ENCODE measurements at regions of chr2 and their contacts with region 1.

Region 1: DNA sequence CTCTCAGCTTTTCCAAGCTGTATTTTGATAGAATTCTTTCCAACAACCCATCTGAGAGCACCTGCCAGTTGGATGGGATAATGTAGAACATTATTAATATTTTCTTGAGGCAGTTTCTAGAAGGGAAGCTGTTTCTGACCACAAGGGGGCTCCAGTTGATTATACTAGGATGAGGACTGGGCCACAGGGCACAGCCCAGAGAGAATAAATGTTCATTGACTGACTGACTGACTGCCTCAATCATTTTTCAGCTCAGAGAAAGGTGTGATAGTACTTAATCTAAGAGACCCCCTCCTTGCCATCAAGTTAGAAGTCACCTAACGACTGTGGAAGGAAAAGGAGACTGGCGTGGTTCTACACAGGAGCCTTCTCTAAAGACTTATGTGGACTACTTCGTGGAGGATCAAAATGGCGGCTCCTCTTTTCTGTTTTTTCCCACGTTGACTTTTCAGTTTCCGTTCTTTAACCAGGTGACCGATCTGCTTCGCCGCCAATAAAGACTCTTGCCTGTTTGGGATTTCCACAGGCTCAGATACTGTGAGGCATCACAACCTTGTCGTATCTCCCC is 31.9 kb upstream of the CREG2 start:
- DNase-seq: peak; percentile 64
- H3K4me3 Mint-ChIP-seq: no peak overlapping the region
- H3K27ac Mint-ChIP-seq: no peak overlapping the region
- H3K4me1 Mint-ChIP-seq: no peaks in the 10 kb centered on the region
- H3K27me3 Mint-ChIP-seq: no peaks in the 10 kb centered on the region

Region 2: DNA sequence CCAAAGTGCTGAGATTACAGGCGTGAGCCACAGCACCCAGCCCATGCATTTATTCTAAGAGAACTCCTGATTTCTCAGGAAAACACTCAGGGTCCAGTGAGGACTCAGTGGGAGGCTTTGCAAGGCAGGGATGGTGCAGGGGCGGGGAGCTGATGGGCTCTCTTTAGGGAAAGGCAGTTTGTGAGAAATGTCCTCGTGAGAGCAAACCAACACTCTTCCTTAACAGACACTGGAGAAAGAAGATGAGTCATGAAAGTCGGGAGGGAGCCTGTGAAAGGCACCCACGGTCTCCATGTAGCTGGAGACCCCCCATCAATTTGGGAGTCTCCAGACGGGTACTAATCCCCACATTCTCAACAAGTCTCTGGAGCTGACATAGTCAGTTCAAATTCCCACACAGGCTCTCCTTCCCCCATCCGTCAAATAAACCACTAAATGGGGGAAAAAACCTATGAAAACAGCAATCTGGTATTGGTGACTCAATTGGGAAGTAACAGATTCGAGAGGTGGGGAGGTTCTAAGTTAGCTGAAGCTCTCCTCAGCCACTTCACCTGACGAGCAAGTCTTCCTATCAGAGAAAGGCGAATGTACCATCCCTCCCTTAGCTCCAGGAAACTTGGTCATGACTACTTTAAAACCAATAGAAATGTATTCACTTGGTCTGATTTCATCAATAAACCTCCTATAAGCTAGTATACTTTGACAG is 20.9 kb before region 1 on chr2:
- CTCF ChIA-PET with region 1: interaction called, 10 read pairs
- POLR2A ChIA-PET with region 1: no interaction called
- DNase-seq: no peak
- H3K4me3 Mint-ChIP-seq: no peak overlapping the region
- H3K27ac Mint-ChIP-seq: no peak overlapping the region
- H3K4me1 Mint-ChIP-seq: peaks cover 13% of the 10 kb centered on the region
- H3K27me3 Mint-ChIP-seq: peaks cover 28% of the 10 kb centered on the region

Region 3: GRCh38 chr2:101509499-101510284 is 90.5 kb after region 1 on chr2:
- CTCF ChIA-PET with region 1: no interaction called
- POLR2A ChIA-PET with region 1: no interaction called
- DNase-seq: no peak
- H3K4me3 Mint-ChIP-seq: no peak overlapping the region
- H3K27ac Mint-ChIP-seq: no peak overlapping the region
- H3K4me1 Mint-ChIP-seq: peaks cover 2% of the 10 kb centered on the region
- H3K27me3 Mint-ChIP-seq: peaks cover 4% of the 10 kb centered on the region

Region 4: GRCh38 chr2:101558740-101559519 is 139.8 kb after region 1 on chr2:
- CTCF ChIA-PET with region 1: no interaction called
- POLR2A ChIA-PET with region 1: no interaction called
- DNase-seq: no peak
- H3K4me3 Mint-ChIP-seq: no peak overlapping the region
- H3K27ac Mint-ChIP-seq: no peak overlapping the region
- H3K4me1 Mint-ChIP-seq: peaks cover 26% of the 10 kb centered on the region
- H3K27me3 Mint-ChIP-seq: no peaks in the 10 kb centered on the region

Region 5: GRCh38 chr2:101725515-101726192 is 306.5 kb after region 1 on chr2:
- CTCF ChIA-PET with region 1: interaction called, 14 read pairs
- POLR2A ChIA-PET with region 1: no interaction called
- DNase-seq: no peak
- H3K4me3 Mint-ChIP-seq: no peak overlapping the region
- H3K27ac Mint-ChIP-seq: no peak overlapping the region
- H3K4me1 Mint-ChIP-seq: peaks cover 81% of the 10 kb centered on the region
- H3K27me3 Mint-ChIP-seq: no peaks in the 10 kb centered on the region

Region 6: DNA sequence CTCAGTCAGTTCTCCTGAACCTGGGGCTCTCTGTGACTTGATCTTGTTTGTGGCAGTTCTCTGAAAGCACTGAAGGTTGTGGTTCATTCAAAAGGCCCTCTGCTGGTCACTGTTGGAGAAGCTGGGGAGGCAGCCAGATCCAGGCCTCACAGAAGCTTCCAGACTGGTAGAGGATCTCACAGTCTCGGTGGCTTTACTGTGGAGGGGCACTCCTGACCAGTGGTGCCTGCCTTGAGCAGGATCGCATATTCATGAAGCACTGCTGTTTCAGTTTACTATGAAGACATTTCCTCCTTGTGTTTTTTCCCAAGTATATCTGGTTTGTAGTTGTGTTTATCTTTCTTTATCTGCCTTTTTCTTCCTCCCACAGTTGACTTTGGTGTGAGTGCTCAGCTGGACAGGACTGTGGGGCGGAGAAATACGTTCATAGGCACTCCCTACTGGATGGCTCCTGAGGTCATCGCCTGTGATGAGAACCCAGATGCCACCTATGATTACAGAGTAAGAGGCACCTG is 412.2 kb after region 1 on chr2:
- CTCF ChIA-PET with region 1: interaction called, 40 read pairs
- POLR2A ChIA-PET with region 1: interaction called, 3 read pairs
- DNase-seq: peak; percentile 69
- H3K4me3 Mint-ChIP-seq: no peak overlapping the region
- H3K27ac Mint-ChIP-seq: peak overlapping the region; percentile 57
- H3K4me1 Mint-ChIP-seq: peaks cover 52% of the 10 kb centered on the region
- H3K27me3 Mint-ChIP-seq: no peaks in the 10 kb centered on the region

Measured in activated CD4-positive, alpha-beta memory T cell treated with anti-CD3 and anti-CD28 coated beads, Interleukin-2, amount 10 ng/mL, durations not matched to agents 7 days and 5 days (primary cell).